Activated T-helper 2 cell treated with anti-CD3 and anti-CD28 coated beads, Interferon-gamma antibody, Interleukin-2, Interleukin-4, amounts not matched to agents 10 μg/mL and 5 μg/mL and 100 μg/mL, durations not matched to agents 14 hours and 24 hours and 36 hours (primary cell): ENCODE measurements at regions of chr12 and their contacts with region 1.

Region 1: DNA sequence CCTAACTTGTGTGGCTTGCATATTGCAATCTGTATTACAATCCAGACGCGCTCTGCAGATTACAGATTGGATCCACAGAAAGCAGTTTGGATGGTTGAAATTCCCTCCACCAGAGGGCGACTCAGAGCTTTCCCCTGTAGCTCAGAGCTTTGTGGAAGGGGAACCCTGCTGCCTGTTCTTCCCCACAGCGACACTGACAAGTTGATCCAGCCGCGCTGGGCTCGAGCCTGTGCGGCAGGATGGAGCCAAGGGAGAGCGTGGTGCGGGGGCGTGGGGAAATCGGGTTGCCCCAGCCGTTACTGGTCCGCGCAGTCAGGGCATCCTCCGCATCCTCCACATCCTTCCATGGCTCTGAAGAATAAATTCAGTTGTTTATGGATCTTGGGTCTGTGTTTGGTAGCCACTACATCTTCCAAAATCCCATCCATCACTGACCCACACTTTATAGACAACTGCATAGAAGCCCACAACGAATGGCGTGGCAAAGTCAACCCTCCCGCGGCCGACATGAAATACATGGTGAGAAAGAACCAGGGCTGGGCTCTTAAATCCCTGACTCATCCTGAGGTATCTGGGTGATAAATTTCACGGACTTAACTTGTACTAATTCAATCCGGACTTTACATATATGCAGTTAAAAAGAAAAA is at the start of gene GLIPR1L1:
- DNase-seq: peak; percentile 68
- H3K4me3 Mint-ChIP-seq: peak within 1 kb of the TSS; percentile 73
- H3K27ac Mint-ChIP-seq: no peak within 1 kb of the TSS
- H3K4me1 Mint-ChIP-seq: peaks cover 23% of the 10 kb centered on the region
- H3K27me3 Mint-ChIP-seq: peaks cover 52% of the 10 kb centered on the region
- total RNA-seq, gene GLIPR1L1: not detected in 2 replicates

Region 2: GRCh38 chr12:75190846-75191245 is 143.7 kb before region 1 on chr12:
- intact Hi-C with region 1: no loop called
- DNase-seq: no peak
- H3K4me3 Mint-ChIP-seq: no peak overlapping the region
- H3K27ac Mint-ChIP-seq: no peak overlapping the region
- H3K4me1 Mint-ChIP-seq: no peaks in the 10 kb centered on the region
- H3K27me3 Mint-ChIP-seq: no peaks in the 10 kb centered on the region

Region 3: GRCh38 chr12:75207338-75208083 is 127.0 kb before region 1 on chr12:
- intact Hi-C with region 1: no loop called
- DNase-seq: no peak
- H3K4me3 Mint-ChIP-seq: no peak overlapping the region
- H3K27ac Mint-ChIP-seq: no peak overlapping the region
- H3K4me1 Mint-ChIP-seq: no peaks in the 10 kb centered on the region
- H3K27me3 Mint-ChIP-seq: peaks cover 34% of the 10 kb centered on the region

Region 4: GRCh38 chr12:75390899-75391538 is 56.5 kb after region 1 on chr12 and contains the start of gene GLIPR1L2:
- intact Hi-C with region 1: loop called (anchors 1 kb)
- DNase-seq: peak; percentile 82
- H3K4me3 Mint-ChIP-seq: peak within 1 kb of the TSS; percentile 87
- H3K27ac Mint-ChIP-seq: peak within 1 kb of the TSS; percentile 86
- H3K4me1 Mint-ChIP-seq: peaks cover 27% of the 10 kb centered on the region
- H3K27me3 Mint-ChIP-seq: no peaks in the 10 kb centered on the region
- total RNA-seq, gene GLIPR1L2: not detected in 2 replicates

Region 5: GRCh38 chr12:75505706-75506312 is 171.3 kb after region 1 on chr12:
- intact Hi-C with region 1: loop called (anchors 1 kb)
- DNase-seq: no peak
- H3K4me3 Mint-ChIP-seq: no peak overlapping the region
- H3K27ac Mint-ChIP-seq: peak overlapping the region; percentile 38
- H3K4me1 Mint-ChIP-seq: peaks cover 28% of the 10 kb centered on the region
- H3K27me3 Mint-ChIP-seq: no peaks in the 10 kb centered on the region

Region 6: DNA sequence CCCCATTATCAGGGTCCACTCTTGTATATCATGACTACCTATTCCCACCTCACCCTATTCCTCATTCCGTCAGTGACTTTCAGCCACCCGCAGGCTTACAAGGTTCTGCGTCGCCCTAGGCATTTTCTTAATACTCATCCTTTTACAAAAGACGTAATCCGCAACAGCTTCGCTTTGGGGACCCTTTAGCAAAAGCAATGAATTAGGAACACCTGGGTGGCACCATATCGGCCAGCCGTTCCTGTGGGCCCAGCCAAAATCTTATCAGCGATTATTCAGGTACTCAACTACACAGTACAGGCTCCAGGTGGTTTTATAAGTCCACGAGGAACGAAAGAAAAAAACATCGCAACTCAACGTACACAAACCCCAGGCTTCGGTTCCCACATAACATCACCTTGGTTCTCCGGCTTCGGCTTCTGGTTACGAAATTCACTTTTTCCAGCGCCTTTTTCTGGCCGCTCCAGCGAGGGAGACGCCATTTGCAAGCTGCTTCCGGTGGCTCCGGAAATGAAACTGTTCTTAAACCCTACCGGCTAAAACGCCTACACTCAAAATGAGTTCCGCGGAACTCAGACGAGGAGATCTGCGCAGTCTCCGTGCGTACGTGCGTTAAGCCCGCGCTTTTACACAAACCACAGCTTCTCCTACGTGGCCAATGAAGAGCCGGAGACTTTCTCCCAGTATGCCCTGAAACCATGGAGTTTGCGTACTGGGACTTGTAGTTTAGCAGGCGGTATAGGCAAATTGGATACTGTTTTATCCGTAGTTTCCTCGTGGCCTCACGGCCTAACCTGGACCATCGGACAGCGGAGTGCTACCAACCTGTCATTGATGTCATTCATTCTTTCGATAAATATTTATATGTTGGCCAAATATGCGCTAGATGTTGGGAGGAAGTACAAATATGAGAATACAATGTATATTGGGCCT is 176.9 kb after region 1 on chr12 and contains the start of gene KRR1:
- intact Hi-C with region 1: loop called (anchors 2 kb)
- DNase-seq: peak; percentile 91
- H3K4me3 Mint-ChIP-seq: peak within 1 kb of the TSS; percentile 96
- H3K27ac Mint-ChIP-seq: peak within 1 kb of the TSS; percentile 98
- H3K4me1 Mint-ChIP-seq: peaks cover 30% of the 10 kb centered on the region
- H3K27me3 Mint-ChIP-seq: no peaks in the 10 kb centered on the region
- total RNA-seq, gene KRR1: 114 and 119 TPM in 2 replicates

Region 7: DNA sequence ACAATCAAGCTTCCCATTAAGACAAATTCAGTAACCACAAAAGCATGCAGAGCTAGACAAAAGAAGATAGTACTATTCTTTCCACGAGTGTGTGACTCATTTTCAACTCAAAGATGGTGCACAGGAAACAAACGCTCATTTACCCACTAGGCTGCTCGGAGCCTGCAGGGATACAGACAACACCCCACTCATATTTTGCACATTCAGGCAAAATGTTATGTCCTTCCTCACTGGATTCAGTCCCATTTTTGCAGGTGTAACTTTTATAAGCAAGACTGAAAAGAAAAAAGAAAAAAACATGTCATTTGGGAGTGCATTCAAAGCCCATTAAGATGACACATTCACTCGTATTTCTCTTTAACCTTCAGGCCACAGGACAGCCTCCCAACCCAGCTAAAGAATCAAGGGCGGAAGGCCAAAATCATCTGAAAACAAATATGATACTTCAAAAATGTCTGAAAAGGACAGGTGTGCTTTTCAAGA is 324.4 kb after region 1 on chr12:
- intact Hi-C with region 1: loop called (anchors 10 kb)
- DNase-seq: peak; percentile 9
- H3K4me3 Mint-ChIP-seq: no peak overlapping the region
- H3K27ac Mint-ChIP-seq: peak overlapping the region; percentile 5
- H3K4me1 Mint-ChIP-seq: peaks cover 34% of the 10 kb centered on the region
- H3K27me3 Mint-ChIP-seq: peaks cover 6% of the 10 kb centered on the region

Region 8: DNA sequence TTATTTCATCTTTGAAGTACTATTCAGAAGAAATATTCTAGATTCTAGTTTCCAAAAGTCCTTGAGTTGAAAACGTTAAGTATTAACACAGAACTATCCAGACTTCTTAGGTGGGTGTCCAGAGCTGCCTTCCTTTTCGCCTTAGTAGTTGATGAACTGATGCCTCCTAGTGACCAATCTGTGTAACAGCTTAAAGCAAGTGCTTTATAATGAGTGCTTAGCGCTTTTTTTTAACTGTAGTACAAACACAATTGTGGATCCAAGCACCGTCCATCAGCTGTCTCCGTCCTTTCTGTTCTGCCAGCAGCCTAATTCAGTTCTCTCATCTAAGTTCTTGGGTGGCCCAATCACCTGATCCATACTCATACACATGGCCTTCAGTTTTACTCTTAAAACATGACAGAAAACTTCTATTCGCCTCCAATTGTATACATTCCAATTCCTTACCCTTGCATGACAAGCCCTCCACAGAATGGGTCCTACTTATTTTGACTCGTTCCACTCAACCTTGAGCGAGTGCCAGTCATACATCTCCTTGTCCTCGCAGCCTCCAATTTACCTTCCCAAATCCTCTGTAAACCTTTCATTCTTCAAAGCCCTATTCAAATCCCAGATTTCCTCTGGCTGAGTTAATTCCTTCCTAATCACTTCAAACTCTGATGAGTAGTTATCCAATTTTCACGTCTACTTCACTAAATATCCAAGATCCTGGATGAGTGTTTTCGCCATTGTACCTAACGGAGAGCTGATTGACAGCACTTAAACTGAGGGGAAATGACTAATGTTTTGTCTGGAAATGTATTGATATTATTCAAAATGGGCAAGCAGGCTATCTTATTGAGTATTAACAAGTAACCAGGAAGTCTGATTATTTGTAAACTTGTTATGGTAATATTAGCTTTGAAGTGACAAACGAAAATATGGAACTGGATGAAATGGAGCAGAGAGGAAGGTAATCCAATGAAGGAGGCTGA is 702.9 kb after region 1 on chr12:
- intact Hi-C with region 1: loop called (anchors 5 kb)
- DNase-seq: no peak
- H3K4me3 Mint-ChIP-seq: no peak overlapping the region
- H3K27ac Mint-ChIP-seq: no peak overlapping the region
- H3K4me1 Mint-ChIP-seq: peaks cover 30% of the 10 kb centered on the region
- H3K27me3 Mint-ChIP-seq: no peaks in the 10 kb centered on the region

Region 9: GRCh38 chr12:76455582-76456345 is 1121.3 kb after region 1 on chr12:
- intact Hi-C with region 1: loop called (anchors 10 kb)
- DNase-seq: no peak
- H3K4me3 Mint-ChIP-seq: no peak overlapping the region
- H3K27ac Mint-ChIP-seq: no peak overlapping the region
- H3K4me1 Mint-ChIP-seq: peaks cover 8% of the 10 kb centered on the region
- H3K27me3 Mint-ChIP-seq: no peaks in the 10 kb centered on the region